Thyroid gland (tissue), 4 donors: ENCODE measurements at regions of chr1 and their contacts with region 1.

Region 1: GRCh38 chr1:54499360-54500106 is 48.5 kb upstream of the ACOT11 start:
- DNase-seq: peak; percentile 14 to 26
- H3K4me3 ChIP-seq: peak overlapping the region in 1 of 3 donors; percentile 19
- H3K27ac ChIP-seq: no peak overlapping the region
- H3K4me1 ChIP-seq: peaks cover 7 to 13% of the 10 kb centered on the region in 2 donors
- H3K27me3 ChIP-seq: peaks cover 5% of the 10 kb centered on the region
- CTCF ChIP-seq: peak in 2 of 6 experiments; percentile 23 to 38
- POLR2A ChIP-seq: no peak

Region 2: GRCh38 chr1:54199765-54200518 is 299.6 kb before region 1 on chr1 and contains the starts of genes CYB5RL and MRPL37:
- intact Hi-C with region 1: loop called (anchors 10 kb)
- DNase-seq: peak; percentile 94
- H3K4me3 ChIP-seq: peak within 1 kb of the TSS; percentile 70 to 97 (median 91)
- H3K27ac ChIP-seq: peak within 1 kb of the TSS in 2 of 3 donors; percentile 70 to 78
- H3K4me1 ChIP-seq: peaks cover 12 to 19% of the 10 kb centered on the region in 2 donors
- H3K27me3 ChIP-seq: no peaks in the 10 kb centered on the region
- CTCF ChIP-seq: no peak
- POLR2A ChIP-seq: peak in 1 of 2 donors; percentile 58
- total RNA-seq, gene CYB5RL: 3.7 to 6.2 (median 5.2) TPM
- total RNA-seq, gene MRPL37: 29.8 to 71.3 (median 48.0) TPM

Region 3: DNA sequence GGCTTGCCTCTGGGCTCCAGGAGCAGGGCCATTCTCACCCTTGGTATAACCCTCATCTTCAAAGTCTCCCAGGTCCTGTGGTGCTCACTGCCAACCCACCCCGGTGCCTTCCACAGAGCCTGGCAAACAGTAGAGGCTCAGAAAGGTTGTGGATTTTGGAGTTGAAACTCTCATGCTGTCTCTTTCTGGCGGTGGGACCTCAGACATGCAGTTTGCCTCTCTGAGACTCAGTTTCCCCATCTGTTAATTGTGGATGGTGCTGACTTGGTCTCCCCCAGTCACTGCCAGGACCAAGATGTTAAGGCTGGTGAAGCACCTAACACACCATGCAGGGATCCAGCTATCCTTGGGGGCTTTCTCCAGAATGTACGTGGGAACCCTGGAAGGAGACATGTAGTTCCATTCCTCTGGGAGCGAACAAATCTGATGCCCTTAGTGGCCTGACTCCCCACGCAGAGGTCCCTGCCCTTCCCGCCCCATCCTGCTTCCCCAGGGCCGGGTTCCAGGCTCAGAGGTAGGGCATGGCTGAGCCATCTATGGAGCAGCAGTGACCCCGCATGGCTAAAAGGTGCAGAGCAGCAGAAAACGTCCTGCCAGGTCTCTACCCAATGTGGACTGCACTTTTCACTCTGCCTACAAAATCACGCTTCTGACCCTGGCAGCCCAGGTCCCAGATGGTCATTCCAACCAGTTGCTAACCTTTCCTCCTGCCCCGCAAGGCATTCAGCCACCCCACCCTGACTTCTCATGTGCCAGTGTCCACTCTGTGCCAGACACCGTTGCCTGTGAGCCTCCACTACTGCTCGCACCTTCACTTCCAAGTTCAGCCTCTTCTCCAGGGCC is 310.8 kb after region 1 on chr1:
- intact Hi-C with region 1: loop called (anchors 10 kb)
- DNase-seq: peak; percentile 57 to 62
- H3K4me3 ChIP-seq: no peak overlapping the region
- H3K27ac ChIP-seq: no peak overlapping the region
- H3K4me1 ChIP-seq: no peaks in the 10 kb centered on the region
- H3K27me3 ChIP-seq: no peaks in the 10 kb centered on the region
- CTCF ChIP-seq: peak; percentile 40 to 90 (median 78)
- POLR2A ChIP-seq: no peak